GM23248 (cell line): ENCODE measurements at regions of chr2 and their contacts with region 1.

Region 1: DNA sequence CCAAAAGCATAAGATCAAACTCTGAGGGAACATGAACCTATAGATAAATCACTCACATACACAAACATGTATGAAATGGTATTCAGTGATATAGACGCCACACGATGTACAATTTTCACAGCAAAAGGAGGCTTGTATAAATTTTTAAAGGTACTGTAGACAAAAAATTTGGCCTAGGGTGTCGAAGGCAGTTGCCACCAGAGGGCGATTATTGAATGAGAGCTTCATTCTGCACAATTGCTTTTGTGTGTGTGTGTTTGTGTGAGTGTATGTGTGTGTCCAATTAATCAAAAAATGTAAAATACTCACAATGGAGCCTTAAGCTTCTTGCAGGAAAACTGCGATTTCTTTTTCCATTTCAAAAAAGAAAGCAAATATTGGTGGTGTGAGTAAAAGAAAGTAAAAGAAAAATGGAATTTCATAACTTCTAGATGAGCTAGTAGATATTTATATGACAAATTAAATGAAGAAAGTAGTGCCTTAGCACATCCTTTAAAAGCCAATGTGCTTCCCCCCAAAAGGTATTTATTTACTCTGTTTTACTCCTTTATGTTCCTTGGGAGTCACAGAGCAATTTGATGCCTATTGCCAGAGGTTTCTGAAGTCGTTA is 800.1 kb downstream of the SATB2 start:
- DNase-seq: peak; percentile 61
- H3K4me3 ChIP-seq: no peak overlapping the region
- H3K27ac ChIP-seq: no peak overlapping the region
- H3K4me1 ChIP-seq: no peaks in the 10 kb centered on the region
- H3K27me3 ChIP-seq: no peaks in the 10 kb centered on the region

Region 2: GRCh38 chr2:198347349-198347748 is 310.3 kb before region 1 on chr2:
- in situ Hi-C with region 1: no loop called
- DNase-seq: peak; percentile 23
- H3K4me3 ChIP-seq: no peak overlapping the region
- H3K27ac ChIP-seq: no peak overlapping the region
- H3K4me1 ChIP-seq: peaks cover 10% of the 10 kb centered on the region; the same call in 1 of the 2 replicates
- H3K27me3 ChIP-seq: no peaks in the 10 kb centered on the region

Region 3: DNA sequence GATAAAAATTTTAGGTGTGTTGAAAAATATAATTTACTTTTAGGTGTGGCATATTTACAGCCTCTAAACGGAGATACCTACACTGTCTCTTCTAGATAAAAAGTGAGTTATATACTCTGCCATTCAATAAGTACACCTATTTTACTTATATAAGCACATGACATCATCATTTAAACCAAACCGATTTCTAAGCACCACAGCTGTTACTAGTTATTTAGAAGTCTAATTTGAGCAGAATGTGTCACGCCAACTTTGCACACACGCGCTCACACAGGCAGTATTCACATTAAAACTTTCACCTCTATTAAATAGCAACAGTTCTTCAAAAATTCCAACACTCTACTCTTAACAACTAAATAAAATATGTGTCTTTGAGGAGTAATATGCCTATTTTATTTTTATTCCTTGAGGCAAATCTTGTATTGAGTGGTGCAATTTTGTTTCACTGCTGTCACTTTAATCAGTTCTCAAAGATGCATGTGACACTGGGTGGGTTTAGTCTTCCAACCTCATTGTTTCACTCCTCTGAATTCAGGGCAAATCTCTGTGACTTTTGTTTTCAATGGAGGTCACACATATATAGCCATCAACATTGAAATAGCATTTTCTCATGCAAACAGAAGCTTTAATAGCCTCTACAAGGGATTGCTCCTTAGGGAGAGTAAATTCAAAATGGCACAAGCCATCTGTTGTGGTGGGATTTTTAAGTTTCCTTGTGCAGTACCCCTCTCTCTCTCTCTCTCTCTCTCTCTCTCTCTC is 132.2 kb before region 1 on chr2:
- in situ Hi-C with region 1: no loop called
- DNase-seq: peak; percentile 26
- H3K4me3 ChIP-seq: no peak overlapping the region
- H3K27ac ChIP-seq: no peak overlapping the region
- H3K4me1 ChIP-seq: no peaks in the 10 kb centered on the region
- H3K27me3 ChIP-seq: no peaks in the 10 kb centered on the region

Region 4: DNA sequence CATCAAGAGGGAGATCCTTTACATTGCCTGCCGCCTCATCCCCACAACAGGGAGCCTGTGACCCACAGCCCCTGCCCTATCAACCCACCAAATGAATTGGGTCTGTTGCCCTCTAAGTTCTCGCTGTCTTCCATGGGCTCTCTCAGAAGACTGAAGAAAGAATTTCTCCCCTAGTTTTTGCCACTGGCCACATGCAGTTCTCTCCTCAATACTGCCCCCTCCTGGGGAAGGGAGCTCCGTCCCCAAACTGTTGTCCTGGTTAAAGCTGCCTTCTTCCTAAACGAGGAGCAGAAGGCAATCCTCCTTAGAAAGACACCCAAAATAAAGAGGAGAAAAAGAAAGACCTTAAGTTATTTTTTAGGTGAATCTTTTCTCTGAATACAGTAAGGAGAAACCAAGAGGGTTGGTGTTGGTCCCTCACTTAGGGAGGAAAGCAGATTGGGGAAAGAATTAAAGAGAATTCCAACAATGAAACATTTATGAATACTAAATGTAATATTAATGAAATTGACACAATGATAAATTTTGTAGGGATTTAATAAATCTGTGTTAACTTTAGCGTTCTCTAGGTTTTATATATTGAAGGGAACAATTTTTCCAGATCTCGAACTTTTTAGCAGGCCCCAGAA is 831.3 kb after region 1 on chr2:
- in situ Hi-C with region 1: loop called (anchors 25 kb)
- DNase-seq: peak; percentile 70
- H3K4me3 ChIP-seq: no peak overlapping the region
- H3K27ac ChIP-seq: no peak overlapping the region
- H3K4me1 ChIP-seq: no peaks in the 10 kb centered on the region
- H3K27me3 ChIP-seq: no peaks in the 10 kb centered on the region; the same call in 1 of the 2 replicates